ENCODE measurements at regions of chr16 and their contacts with region 1.

Region 1: DNA sequence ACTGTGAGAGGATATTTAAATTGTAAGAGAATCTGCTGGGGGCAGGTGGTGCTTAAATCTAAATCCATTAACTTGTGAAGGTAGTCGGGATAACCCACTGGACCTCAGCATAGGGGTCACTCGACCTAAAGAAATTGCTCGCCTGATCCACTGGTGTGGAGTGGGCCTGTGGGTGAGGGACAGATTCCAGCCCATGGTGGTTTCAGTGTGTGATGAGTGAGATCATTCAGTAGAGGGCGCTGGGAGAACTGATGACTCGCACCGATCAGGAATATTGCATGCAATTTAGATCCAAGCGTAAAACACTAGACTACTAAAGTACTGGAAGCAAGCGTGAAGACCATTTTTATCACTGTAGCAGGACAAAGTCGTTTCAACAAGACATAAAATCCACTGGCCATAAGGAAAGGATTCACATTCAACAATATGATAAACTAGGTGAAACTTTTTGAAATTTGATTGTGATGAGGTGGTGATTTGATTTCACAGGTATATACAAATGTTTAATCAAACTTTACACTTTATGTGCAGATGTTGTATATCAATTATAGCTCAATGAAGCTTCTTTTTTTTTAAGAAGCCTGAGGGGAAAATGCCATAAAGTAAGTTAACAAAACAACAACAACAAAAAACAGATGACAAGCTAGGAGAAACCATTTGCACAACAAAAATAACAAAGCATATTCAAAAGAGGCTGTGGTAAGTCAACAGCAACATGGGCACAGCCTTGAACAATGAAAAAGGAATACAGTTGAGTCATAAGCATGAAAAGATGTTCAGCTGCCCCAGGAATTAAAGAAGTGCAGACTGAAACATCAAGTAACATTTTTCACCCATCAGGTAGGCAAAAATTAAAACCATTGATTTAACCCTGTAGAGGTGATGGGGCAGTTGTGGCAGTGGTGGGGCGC is 7.5 kb upstream of the TMEM170A start:
- DNase-seq: peak; percentile 61
- ATAC-seq: peak; percentile 94
- H3K4me3 ChIP-seq: no peak overlapping the region
- H3K27ac ChIP-seq: no peak overlapping the region
- H3K4me1 ChIP-seq: peaks cover 6% of the 10 kb centered on the region
- H3K27me3 ChIP-seq: no peaks in the 10 kb centered on the region; a peak in 1 of 5 replicates
- CTCF ChIP-seq: peak; percentile 94
- EP300 ChIP-seq: no peak
- POLR2A ChIP-seq: no peak
- RAD21 ChIP-seq: peak; percentile 77

Region 2: GRCh38 chr16:75550211-75550662 is 78.3 kb after region 1 on chr16:
- CTCF ChIA-PET with region 1: no interaction called
- POLR2A ChIA-PET with region 1: no interaction called
- in situ Hi-C with region 1: no loop called
- intact Hi-C with region 1: loop called (anchors 1 kb)
- DNase-seq: peak; percentile 58
- ATAC-seq: peak; percentile 45
- H3K4me3 ChIP-seq: no peak overlapping the region
- H3K27ac ChIP-seq: no peak overlapping the region
- H3K4me1 ChIP-seq: peaks cover 12% of the 10 kb centered on the region; the same call in 1 of the 2 replicates
- H3K27me3 ChIP-seq: no peaks in the 10 kb centered on the region
- CTCF ChIP-seq: peak; percentile 81
- EP300 ChIP-seq: no peak
- POLR2A ChIP-seq: no peak
- RAD21 ChIP-seq: peak; percentile 53

Region 3: GRCh38 chr16:75764154-75764768 is 292.3 kb after region 1 on chr16:
- CTCF ChIA-PET with region 1: interaction called, 13 read pairs
- POLR2A ChIA-PET with region 1: no interaction called
- in situ Hi-C with region 1: loop called (anchors 5 kb)
- intact Hi-C with region 1: loop called (anchors 1 kb)
- DNase-seq: peak; percentile 69
- ATAC-seq: peak; percentile 98
- H3K4me3 ChIP-seq: no peak overlapping the region
- H3K27ac ChIP-seq: no peak overlapping the region
- H3K4me1 ChIP-seq: no peaks in the 10 kb centered on the region
- H3K27me3 ChIP-seq: no peaks in the 10 kb centered on the region
- CTCF ChIP-seq: peak; percentile 91
- EP300 ChIP-seq: no peak
- POLR2A ChIP-seq: no peak
- RAD21 ChIP-seq: peak; percentile 86